Activated naive CD4-positive, alpha-beta T cell treated with anti-CD3 and anti-CD28 coated beads for 36 hours (primary cell): ENCODE measurements at regions of chr7 and their contacts with region 1.

Region 1: GRCh38 chr7:66844552-66845378 is 76.3 kb upstream of the TMEM248 start:
- DNase-seq: peak; percentile 99
- H3K4me3 Mint-ChIP-seq: peak overlapping the region; percentile 88
- H3K27ac Mint-ChIP-seq: peak overlapping the region; percentile 98
- H3K4me1 Mint-ChIP-seq: peaks cover 16% of the 10 kb centered on the region
- H3K27me3 Mint-ChIP-seq: peaks cover 2% of the 10 kb centered on the region

Region 2: DNA sequence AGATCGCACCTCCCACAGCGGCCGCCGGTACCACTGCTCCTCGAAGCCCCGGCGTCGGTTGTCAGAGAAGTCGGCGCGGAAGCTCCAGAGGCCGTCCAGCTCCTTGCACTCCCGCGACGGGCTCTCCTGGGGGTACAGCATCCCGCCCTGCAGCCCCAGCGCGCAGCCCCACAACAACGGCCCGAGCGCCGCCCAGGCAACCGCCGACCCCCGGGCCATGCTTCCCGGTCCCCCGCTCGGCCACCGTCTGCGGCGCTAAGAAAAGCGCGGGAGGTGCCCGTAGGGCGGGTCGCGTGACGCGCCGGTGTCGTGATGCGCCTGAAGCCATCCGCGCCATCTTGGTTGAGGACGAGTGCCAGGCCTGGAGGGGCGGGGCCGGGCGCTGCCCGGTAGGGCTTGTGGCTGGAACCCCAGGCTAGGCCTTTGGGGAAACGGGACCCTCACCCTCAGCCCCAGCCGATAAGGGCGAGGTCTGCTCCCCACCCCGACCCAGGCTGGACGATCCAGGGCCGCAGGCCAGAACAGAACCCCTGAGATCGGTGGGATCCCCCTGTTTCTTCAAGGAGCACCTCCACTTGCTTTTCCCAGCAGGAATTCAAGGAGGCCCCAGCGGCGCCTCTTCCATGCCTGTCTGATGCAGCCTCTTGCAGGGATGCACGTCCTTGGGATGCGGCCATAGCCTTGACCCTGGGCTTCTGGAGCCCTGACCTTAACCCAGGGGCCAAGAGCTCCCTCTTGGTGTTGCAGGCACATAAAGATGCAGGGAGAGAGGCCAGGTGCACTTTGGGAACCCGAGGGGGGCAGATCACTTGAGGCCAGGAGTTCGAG is 862.6 kb before region 1 on chr7 and contains the start of gene GUSB:
- CTCF ChIA-PET with region 1: no interaction called
- intact Hi-C with region 1: loop called (anchors 2 kb)
- DNase-seq: peak; percentile 93
- H3K4me3 Mint-ChIP-seq: peak within 1 kb of the TSS; percentile 87
- H3K27ac Mint-ChIP-seq: peak within 1 kb of the TSS; percentile 78
- H3K4me1 Mint-ChIP-seq: peaks cover 8% of the 10 kb centered on the region
- H3K27me3 Mint-ChIP-seq: no peaks in the 10 kb centered on the region
- total RNA-seq, gene GUSB: 42.8 to 44.0 TPM

Region 3: DNA sequence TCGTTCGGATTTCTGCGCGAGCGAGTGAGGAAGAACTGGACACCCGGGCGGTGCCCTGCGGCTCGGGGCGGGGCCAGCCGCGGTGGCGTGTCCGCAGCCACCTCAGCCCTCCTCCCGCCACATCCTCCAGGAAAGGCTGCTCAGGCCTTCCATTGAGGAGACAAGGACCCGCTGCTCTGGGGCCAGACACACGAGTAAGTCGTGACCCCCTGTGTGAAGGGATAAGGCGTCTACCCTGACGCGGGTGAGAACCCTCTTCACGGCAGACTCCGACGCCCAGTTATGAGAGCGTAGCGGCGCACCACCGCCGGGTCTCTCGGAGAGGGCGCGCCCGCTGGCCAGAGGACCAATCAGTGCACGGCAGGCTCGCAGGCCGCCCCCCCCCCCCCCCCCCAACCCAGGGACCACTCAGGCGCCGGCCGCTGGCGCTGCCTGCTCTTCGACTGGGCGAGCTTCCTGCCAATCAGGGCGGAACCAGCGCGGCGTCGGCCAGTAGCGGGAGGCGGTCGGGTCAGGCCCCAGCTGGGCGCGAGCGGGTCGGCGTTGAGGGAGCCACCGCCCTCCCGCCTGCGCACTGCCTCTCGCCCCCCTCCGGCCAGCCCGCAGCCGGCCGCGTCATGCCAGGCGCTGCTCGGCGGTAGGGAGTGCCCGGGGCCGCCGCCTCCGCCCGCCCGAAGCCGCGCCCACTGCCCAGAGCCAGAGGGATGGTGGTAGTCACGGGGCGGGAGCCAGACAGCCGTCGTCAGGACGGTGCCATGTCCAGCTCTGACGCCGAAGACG is 216.2 kb before region 1 on chr7 and contains the start of gene KCTD7:
- CTCF ChIA-PET with region 1: no interaction called
- intact Hi-C with region 1: loop called (anchors 1 kb)
- DNase-seq: peak; percentile 97
- H3K4me3 Mint-ChIP-seq: peak within 1 kb of the TSS; percentile 83
- H3K27ac Mint-ChIP-seq: peak within 1 kb of the TSS; percentile 80
- H3K4me1 Mint-ChIP-seq: peaks cover 41% of the 10 kb centered on the region
- H3K27me3 Mint-ChIP-seq: no peaks in the 10 kb centered on the region
- total RNA-seq, gene KCTD7: 6.3 to 7.5 TPM

Region 4: GRCh38 chr7:66681491-66682349 is 163.0 kb before region 1 on chr7:
- CTCF ChIA-PET with region 1: no interaction called
- intact Hi-C with region 1: loop called (anchors 10 kb)
- DNase-seq: peak; percentile 95
- H3K4me3 Mint-ChIP-seq: peak overlapping the region; percentile 87
- H3K27ac Mint-ChIP-seq: peak overlapping the region; percentile 89
- H3K4me1 Mint-ChIP-seq: peaks cover 29% of the 10 kb centered on the region
- H3K27me3 Mint-ChIP-seq: no peaks in the 10 kb centered on the region

Region 5: GRCh38 chr7:66815951-66816350 is 28.8 kb before region 1 on chr7:
- CTCF ChIA-PET with region 1: no interaction called
- intact Hi-C with region 1: no loop called
- DNase-seq: no peak
- H3K4me3 Mint-ChIP-seq: no peak overlapping the region
- H3K27ac Mint-ChIP-seq: no peak overlapping the region
- H3K4me1 Mint-ChIP-seq: no peaks in the 10 kb centered on the region
- H3K27me3 Mint-ChIP-seq: no peaks in the 10 kb centered on the region

Region 6: DNA sequence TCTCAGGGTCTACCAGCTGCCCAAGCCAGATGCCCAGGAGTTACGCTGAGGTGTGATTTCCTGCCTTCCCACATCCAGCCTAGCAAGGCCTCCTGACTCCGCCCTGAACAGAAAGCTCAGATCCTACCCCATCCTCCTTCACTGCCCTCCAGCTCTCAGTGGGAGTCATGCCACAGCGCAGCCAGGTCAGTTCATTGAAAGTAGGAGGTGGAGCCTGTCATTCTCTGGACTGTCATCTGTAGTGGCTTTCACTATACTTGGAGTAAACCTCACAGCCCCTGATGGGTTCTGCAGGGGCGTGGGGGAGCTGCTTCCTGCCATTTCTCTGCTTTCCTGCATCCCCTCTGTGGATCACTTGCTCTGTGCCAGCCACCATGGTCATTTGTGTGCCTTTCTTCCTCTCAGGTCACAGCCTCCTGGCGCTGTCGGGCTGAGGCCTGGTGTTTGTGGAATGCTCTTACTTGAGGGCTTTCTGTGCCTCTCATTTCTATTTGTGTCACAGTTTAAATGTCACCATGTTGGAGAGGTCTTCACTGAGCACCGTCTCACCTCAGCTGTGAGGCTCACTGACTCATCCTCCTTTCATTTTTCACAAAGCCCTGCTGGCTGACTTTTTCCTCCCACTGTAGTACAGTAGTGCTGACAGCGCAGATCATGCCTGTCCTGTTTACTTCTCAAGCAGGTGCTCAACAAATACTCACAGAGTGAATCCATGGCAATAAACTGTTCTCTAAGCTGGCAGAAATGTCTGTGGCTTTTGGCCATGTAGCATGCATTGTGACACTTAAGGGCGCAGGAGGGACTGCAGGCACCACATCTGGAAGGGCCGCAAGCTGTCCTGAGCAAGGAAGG is 15.3 kb after region 1 on chr7:
- CTCF ChIA-PET with region 1: no interaction called
- intact Hi-C with region 1: loop called (anchors 1 kb)
- DNase-seq: peak; percentile 56
- H3K4me3 Mint-ChIP-seq: no peak overlapping the region
- H3K27ac Mint-ChIP-seq: peak overlapping the region; percentile 28
- H3K4me1 Mint-ChIP-seq: peaks cover 14% of the 10 kb centered on the region
- H3K27me3 Mint-ChIP-seq: no peaks in the 10 kb centered on the region

Region 7: DNA sequence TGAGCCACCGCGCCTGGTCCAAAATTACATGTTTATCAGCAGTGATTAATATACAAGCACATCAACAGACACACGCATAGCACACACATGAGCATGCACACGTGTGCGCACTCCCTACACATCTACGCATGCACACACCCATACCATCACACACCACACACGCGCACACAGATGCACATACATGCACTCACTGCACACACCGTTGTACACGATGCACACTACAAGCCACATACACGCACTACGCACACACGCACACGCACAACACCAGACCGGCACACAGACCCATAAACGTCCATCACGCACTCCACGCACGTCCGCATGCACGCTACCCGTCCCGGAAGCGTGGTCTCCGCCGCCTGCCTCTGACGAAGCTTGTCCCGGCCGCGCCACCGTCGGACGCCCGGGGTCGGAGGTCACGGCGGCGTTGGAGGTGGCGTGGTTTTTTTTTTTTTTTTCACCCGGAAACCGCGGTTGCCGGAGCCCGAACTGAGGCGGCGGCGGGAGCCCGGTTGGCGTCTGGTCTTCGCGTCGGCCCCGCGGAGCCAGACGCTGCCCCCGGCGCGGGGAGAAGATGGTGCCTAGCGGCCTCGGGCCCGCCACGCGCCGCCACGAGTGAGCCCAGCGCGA is 76.1 kb after region 1 on chr7 and contains the start of gene TMEM248:
- CTCF ChIA-PET with region 1: no interaction called
- intact Hi-C with region 1: loop called (anchors 1 kb)
- DNase-seq: peak; percentile 95
- H3K4me3 Mint-ChIP-seq: peak within 1 kb of the TSS; percentile 100
- H3K27ac Mint-ChIP-seq: peak within 1 kb of the TSS; percentile 96
- H3K4me1 Mint-ChIP-seq: peaks cover 38% of the 10 kb centered on the region
- H3K27me3 Mint-ChIP-seq: no peaks in the 10 kb centered on the region
- total RNA-seq, gene TMEM248: 51.4 to 54.0 TPM